Left colon (tissue), 2 donors: ENCODE measurements at regions of chr16 and their contacts with region 1.

Region 1: GRCh38 chr16:55465077-55465896 is 13.7 kb upstream of the MMP2 start:
- DNase-seq: peak; percentile 71 to 93
- ATAC-seq: peak; percentile 97

Region 2: DNA sequence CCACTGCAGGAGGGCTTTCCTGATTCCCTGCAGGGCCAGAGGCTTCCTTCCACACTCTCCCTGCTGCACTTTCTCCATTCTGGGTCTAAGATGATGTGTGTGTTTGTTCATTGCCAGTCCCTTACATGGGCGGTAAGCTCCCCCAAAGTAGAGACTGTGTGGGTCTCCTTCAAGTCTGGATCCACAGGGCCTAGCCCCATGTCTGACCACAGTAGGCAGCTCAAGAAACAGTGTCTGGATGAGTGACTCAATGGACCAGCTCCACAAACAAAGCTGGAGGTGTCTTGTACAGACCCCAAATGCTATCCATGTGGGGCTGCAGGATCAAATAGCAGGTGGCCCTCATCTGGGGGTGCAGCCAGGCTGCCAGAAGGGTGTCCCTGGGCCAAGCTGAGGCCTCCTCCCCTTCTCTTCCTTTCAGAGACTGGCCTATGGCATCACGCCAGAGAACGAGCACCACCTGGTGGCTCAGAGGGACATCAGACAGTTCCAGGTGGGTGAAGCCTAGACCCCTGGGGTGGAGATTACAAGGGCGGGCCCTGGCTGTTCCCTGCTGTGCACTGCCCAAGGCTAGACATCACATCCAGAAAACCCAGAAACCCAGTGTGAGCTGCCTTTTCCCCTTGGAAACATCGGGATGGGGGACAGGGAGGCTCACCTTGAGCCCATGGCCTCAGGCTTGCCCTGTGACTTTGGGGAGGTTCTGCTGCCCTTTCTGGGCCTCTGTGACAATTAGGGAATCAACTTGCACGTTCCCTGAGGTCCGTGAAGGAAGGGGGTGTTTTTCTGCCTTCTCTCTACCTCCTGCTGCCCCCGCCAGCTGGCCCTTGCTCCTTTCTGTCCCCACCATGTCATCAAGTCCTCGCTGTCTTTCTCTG is 236.4 kb after region 1 on chr16:
- intact Hi-C with region 1: loop called (anchors 5 to 10 kb)
- DNase-seq: peak; percentile 30 to 63
- ATAC-seq: peak; percentile 69